Caco-2 (cell line): ENCODE measurements at regions of chr15 and their contacts with region 1.

Region 1: DNA sequence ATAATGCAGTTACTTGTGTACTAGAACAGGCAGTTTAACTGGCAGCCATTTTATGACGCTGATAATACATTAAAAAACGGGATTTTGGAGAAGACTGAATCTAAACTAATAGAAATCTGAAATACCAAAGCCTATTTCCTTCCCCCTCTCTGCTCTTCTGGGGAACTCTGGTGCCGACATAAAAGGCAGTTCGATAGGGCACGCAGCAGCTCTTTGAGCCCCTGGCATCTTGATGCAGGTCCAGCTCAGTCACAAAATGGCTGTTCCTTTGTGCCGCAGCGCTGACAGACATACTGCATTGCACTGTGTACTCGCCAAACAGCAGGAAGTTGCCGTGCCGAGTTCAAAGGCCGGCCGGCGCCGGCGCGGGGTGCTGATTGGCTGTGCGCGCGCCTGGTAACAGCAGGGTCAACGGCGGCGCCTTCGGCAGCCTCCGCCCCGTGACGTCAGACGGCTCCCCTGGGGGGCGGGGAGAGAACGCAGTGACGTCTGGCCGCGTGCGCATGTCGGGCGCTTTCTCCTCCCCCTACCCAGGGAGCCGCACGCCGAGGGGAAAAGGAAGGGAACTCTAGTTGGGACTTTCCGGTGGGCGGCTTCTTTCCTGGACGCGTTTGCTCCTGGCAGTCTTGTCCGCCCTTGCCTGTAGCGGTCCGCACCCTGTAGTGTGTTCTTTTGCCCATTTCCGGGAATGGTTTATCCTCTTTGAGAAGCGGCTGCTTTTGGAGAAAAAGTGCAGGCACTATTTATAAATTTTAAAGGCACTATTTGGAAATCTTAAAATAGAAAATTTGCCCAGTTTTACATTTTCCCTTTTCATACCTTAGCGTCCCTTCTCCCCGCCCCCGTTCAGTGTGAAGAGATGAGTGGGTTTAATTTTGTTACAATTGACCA is 4.1 kb downstream of the CHD2 start:
- DNase-seq: peak; percentile 98 to 99
- H3K4me3 ChIP-seq: peak overlapping the region; percentile 51
- H3K4me3 Mint-ChIP-seq: peak overlapping the region; percentile 86
- H3K27ac Mint-ChIP-seq: peak overlapping the region; percentile 99
- H3K4me1 ChIP-seq: peaks cover 42% of the 10 kb centered on the region
- H3K4me1 Mint-ChIP-seq: peaks cover 45% of the 10 kb centered on the region
- H3K27me3 ChIP-seq: no peaks in the 10 kb centered on the region
- H3K27me3 Mint-ChIP-seq: no peaks in the 10 kb centered on the region
- CTCF ChIP-seq: no peak

Region 2: GRCh38 chr15:92665100-92665555 is 239.1 kb before region 1 on chr15:
- CTCF ChIA-PET with region 1: no interaction called
- POLR2A ChIA-PET with region 1: no interaction called
- intact Hi-C with region 1: loop called (anchors 5 kb)
- DNase-seq: no peak
- H3K4me3 ChIP-seq: no peak overlapping the region
- H3K4me3 Mint-ChIP-seq: peak overlapping the region; percentile 25
- H3K27ac Mint-ChIP-seq: peak overlapping the region; percentile 44
- H3K4me1 ChIP-seq: peaks cover 80% of the 10 kb centered on the region
- H3K4me1 Mint-ChIP-seq: peaks cover 56% of the 10 kb centered on the region
- H3K27me3 ChIP-seq: no peaks in the 10 kb centered on the region
- H3K27me3 Mint-ChIP-seq: no peaks in the 10 kb centered on the region
- CTCF ChIP-seq: no peak

Region 3: DNA sequence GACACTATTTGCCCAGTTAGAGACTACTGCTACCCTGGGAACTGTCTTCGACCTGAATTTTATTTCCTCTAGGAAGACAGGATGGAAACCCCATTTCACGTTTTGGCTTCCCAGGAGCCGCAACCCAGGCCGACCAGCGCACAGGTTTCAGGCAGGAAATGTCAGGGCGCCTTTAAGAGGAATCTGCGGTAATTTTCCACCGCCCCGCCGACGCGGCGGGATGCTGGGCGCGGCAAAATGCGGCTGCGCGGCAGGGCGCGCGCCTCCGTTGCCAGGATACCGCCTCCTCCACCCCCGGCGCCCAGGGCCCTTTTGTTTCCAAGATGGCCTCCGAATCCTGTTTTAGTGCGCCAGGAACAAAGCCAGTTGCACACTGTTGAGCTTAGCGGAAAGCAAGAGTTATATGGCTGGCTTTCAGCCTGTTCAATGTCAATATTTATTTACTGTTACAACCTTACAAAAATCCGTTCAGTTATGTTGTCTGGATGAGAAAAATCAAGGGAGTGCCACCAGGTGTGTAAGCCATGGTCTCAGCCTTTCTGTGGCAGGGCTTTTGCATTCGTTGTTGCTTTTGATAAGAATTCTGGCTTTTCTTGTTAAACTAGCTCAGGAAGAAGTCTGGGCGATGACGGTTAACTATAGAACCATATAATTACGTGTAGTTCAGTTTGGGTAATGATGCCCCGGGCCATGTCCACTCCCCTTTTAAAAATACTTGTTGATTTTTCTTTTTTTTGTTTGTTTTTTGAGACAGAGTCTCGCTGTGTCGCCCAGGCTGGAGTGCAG is 83.8 kb before region 1 on chr15:
- CTCF ChIA-PET with region 1: interaction called, 3 read pairs
- POLR2A ChIA-PET with region 1: interaction called, 10 read pairs
- intact Hi-C with region 1: loop called (anchors 1 kb)
- DNase-seq: peak; percentile 93 to 95
- H3K4me3 ChIP-seq: peak overlapping the region; percentile 17
- H3K4me3 Mint-ChIP-seq: peak overlapping the region; percentile 83
- H3K27ac Mint-ChIP-seq: peak overlapping the region; percentile 94
- H3K4me1 ChIP-seq: peaks cover 38% of the 10 kb centered on the region
- H3K4me1 Mint-ChIP-seq: peaks cover 33% of the 10 kb centered on the region
- H3K27me3 ChIP-seq: no peaks in the 10 kb centered on the region
- H3K27me3 Mint-ChIP-seq: no peaks in the 10 kb centered on the region
- CTCF ChIP-seq: no peak

Region 4: GRCh38 chr15:92917606-92918407 is 13.6 kb after region 1 on chr15:
- CTCF ChIA-PET with region 1: interaction called, 7 read pairs
- POLR2A ChIA-PET with region 1: interaction called, 6 read pairs
- intact Hi-C with region 1: loop called (anchors 1 kb)
- DNase-seq: peak; percentile 92
- H3K4me3 ChIP-seq: peak overlapping the region; percentile 10; the same call in 1 of the 2 replicates
- H3K4me3 Mint-ChIP-seq: peak overlapping the region; percentile 78
- H3K27ac Mint-ChIP-seq: peak overlapping the region; percentile 88
- H3K4me1 ChIP-seq: peaks cover 72% of the 10 kb centered on the region
- H3K4me1 Mint-ChIP-seq: peaks cover 46% of the 10 kb centered on the region
- H3K27me3 ChIP-seq: no peaks in the 10 kb centered on the region
- H3K27me3 Mint-ChIP-seq: no peaks in the 10 kb centered on the region
- CTCF ChIP-seq: peak; percentile 64 to 78

Region 5: GRCh38 chr15:93302080-93302765 is 398.0 kb after region 1 on chr15:
- CTCF ChIA-PET with region 1: no interaction called
- POLR2A ChIA-PET with region 1: interaction called, 11 read pairs
- intact Hi-C with region 1: no loop called
- DNase-seq: no peak
- H3K4me3 ChIP-seq: no peak overlapping the region
- H3K4me3 Mint-ChIP-seq: no peak overlapping the region
- H3K27ac Mint-ChIP-seq: no peak overlapping the region
- H3K4me1 ChIP-seq: no peaks in the 10 kb centered on the region
- H3K4me1 Mint-ChIP-seq: no peaks in the 10 kb centered on the region
- H3K27me3 ChIP-seq: no peaks in the 10 kb centered on the region
- H3K27me3 Mint-ChIP-seq: peaks cover 2% of the 10 kb centered on the region
- CTCF ChIP-seq: no peak